ENCODE measurements at regions of chr10 and their contacts with region 1.

Region 1: GRCh38 chr10:94483970-94484369 is 61.6 kb upstream of the HELLS start:
- DNase-seq: no peak
- ATAC-seq: no peak
- H3K4me3 ChIP-seq: no peak overlapping the region
- H3K27ac ChIP-seq: no peak overlapping the region
- H3K4me1 ChIP-seq: peaks cover under 1 to 4% of the 10 kb centered on the region in 2 donors
- H3K27me3 ChIP-seq: no peaks in the 10 kb centered on the region
- CTCF ChIP-seq: no peak
- POLR2A ChIP-seq: no peak

Region 2: DNA sequence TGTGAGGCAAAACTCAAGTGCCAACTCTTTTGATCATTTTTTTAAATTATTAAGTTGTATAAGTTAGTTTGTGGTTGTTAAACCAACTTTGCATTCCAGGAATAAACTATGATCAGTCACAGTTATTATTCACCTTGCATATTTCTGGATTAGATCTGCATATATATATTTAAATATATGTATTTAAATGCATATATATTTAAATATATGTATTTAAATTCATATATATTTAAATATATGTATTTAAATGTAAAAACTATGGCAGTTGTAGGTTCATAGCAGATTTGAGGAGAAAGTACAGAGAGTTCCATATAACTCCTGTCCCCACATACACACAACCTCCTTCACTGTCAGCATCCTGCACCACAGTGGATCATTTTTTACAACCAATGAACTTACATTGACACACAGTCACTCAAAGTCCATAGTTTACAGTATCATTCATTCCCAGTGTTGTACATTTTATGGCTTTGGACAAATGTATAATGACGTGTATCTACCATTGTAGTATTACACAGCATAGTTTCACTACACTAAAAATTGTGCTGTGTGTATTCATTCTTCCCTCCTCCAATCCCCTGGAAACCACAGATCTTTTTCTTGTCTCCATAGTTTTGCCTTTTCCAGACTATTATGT is 32.0 kb before region 1 on chr10:
- in situ Hi-C with region 1: no loop called
- intact Hi-C with region 1: no loop called
- DNase-seq: no peak
- ATAC-seq: no peak
- H3K4me3 ChIP-seq: no peak overlapping the region
- H3K27ac ChIP-seq: no peak overlapping the region
- H3K4me1 ChIP-seq: peaks cover 0 to 13% of the 10 kb centered on the region in 2 donors
- H3K27me3 ChIP-seq: no peaks in the 10 kb centered on the region
- CTCF ChIP-seq: no peak
- POLR2A ChIP-seq: no peak

Region 3: DNA sequence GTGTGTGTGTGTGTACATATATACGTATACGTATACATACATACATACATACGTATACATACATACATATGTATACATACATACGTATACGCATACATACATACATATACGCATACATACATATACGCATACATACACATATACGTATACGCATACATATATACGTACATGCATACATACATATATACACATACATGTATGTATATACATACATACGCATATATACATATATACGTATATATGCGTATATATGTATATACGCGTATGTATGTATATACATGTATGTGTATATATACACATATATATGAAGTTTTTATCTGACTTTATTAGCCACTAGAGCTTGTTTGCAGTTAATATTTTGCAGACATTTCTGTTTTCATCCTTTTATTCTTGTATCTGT is 18.3 kb before region 1 on chr10:
- in situ Hi-C with region 1: no loop called
- intact Hi-C with region 1: loop called (anchors 2 kb)
- DNase-seq: no peak
- ATAC-seq: no peak
- H3K4me3 ChIP-seq: no peak overlapping the region
- H3K27ac ChIP-seq: no peak overlapping the region
- H3K4me1 ChIP-seq: no peaks in the 10 kb centered on the region
- H3K27me3 ChIP-seq: no peaks in the 10 kb centered on the region
- CTCF ChIP-seq: no peak
- POLR2A ChIP-seq: no peak

Measured in gastrocnemius medialis (tissue), 4 donors.